CD8-positive, alpha-beta T cell (primary cell): ENCODE measurements at regions of chr1 and their contacts with region 1.

Region 1: DNA sequence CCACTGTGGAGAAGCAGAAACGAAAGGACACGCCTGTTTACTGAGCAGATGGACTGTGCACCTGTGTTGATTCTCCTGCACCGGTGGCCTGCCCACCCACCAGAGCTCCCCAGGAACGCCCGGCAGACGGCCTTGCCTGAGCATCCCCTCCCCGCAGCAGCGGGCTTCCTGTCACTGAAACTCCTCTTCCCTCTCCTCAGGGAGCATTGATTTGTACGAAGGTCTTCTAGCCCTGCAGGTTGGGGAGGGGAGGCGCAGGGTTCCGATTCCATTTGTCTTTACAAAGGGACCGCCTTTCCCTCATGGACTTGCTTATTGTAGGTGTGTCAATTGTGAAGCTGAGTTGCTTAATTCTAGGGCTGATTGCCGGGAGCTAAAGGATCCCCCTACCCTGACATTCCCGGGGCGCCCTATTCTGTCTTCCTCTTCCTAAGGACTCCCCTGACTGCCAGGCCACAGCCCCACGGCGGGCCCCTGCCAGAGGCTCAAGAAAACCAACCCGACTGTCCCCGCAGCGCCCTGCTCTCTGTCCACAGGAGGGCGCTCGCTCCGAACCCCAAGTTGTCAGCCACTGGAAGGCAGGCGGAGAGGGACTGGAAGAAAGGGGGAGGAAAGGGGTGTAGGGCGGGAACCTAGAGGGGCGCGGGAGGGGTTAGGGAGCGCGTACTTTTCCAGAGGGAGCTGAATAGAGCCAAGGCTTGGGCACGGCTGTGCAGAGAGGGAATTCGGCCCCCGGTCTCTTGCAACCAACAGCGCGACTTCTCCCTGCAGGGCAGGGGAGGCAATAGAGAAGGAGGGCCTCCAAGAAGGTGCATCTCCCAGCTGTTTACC is 2.8 kb downstream of the S100A6 start:
- DNase-seq: peak; percentile 55 to 86 (median 78)
- ATAC-seq: peak; percentile 13
- H3K4me3 ChIP-seq: peak overlapping the region in 1 of 2 experiments; percentile 33
- H3K4me3 Mint-ChIP-seq: peak overlapping the region; percentile 89
- H3K27ac ChIP-seq: peak overlapping the region; percentile 18 to 92
- H3K27ac Mint-ChIP-seq: peak overlapping the region; percentile 94
- H3K4me1 ChIP-seq: peaks cover 56% of the 10 kb centered on the region
- H3K4me1 Mint-ChIP-seq: peaks cover 67% of the 10 kb centered on the region
- H3K27me3 ChIP-seq: no peaks in the 10 kb centered on the region
- H3K27me3 Mint-ChIP-seq: no peaks in the 10 kb centered on the region
- CTCF ChIP-seq: peak; percentile 79

Region 2: DNA sequence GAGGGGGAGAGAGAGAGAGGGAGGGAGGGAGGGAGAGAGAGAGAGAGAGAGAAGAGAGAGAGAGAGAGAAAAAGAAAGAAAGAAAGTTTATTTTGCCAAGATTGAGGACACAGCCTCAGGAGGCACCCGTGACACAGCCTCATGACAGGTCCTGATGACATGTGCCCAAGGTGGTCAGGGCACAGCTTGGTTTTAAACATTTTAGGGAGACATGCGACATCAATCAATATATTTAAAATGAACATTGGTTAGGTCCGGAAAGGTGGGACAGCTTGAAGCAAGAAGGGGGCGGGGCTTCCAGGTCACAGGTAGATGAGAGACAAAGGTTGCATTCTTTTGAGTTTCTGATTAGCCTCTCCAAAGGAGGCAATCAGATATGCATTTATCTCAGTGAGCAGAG is 12.8 kb before region 1 on chr1:
- CTCF ChIA-PET with region 1: interaction called, 26 read pairs
- POLR2A ChIA-PET with region 1: interaction called, 10 read pairs
- intact Hi-C with region 1: no loop called
- DNase-seq: no peak
- ATAC-seq: no peak
- H3K4me3 ChIP-seq: no peak overlapping the region
- H3K4me3 Mint-ChIP-seq: no peak overlapping the region
- H3K27ac ChIP-seq: no peak overlapping the region
- H3K27ac Mint-ChIP-seq: no peak overlapping the region
- H3K4me1 ChIP-seq: no peaks in the 10 kb centered on the region
- H3K4me1 Mint-ChIP-seq: peaks cover 5% of the 10 kb centered on the region
- H3K27me3 ChIP-seq: no peaks in the 10 kb centered on the region
- H3K27me3 Mint-ChIP-seq: no peaks in the 10 kb centered on the region
- CTCF ChIP-seq: no peak

Region 3: DNA sequence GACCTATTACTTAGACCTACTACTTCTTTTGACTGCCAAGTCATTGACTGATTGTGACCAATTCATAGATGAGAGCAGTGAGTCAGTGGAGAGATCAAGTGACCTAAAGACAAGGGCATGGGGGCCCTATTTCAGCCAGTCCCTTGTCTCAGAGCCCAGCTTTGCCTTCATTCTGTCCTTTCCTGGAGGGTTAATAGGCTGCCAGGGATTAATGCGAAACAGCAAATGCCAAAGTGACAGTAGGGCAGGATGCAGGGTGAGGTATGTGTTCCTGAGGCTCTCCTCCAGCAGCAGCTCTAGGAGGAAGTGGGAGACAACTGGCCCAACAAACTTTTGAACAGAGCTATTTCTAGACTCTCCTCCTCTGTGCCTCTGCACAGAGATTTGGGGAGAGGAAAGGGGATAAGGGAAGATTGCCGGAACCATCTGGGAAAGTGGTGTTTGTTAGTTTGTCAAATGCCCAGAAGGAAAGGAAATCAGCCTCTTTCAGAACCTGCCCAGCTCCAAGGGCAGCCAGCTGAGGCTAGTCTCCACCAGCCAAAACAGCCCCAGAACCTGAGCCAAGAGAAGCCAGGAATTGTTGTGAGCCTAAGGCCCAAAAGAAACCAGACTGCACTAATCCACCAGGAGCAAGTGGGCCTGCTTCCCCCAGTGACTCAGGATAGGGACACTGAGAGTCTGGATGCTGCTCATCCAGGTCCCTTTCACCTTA is 21.0 kb after region 1 on chr1:
- CTCF ChIA-PET with region 1: interaction called, 201 read pairs
- POLR2A ChIA-PET with region 1: interaction called, 6 read pairs
- intact Hi-C with region 1: no loop called
- DNase-seq: no peak
- ATAC-seq: no peak
- H3K4me3 ChIP-seq: no peak overlapping the region
- H3K4me3 Mint-ChIP-seq: no peak overlapping the region
- H3K27ac ChIP-seq: no peak overlapping the region
- H3K27ac Mint-ChIP-seq: no peak overlapping the region
- H3K4me1 ChIP-seq: no peaks in the 10 kb centered on the region
- H3K4me1 Mint-ChIP-seq: no peaks in the 10 kb centered on the region
- H3K27me3 ChIP-seq: no peaks in the 10 kb centered on the region
- H3K27me3 Mint-ChIP-seq: no peaks in the 10 kb centered on the region
- CTCF ChIP-seq: no peak

Region 4: GRCh38 chr1:153572569-153573015 is 39.6 kb after region 1 on chr1:
- CTCF ChIA-PET with region 1: interaction called, 168 read pairs
- POLR2A ChIA-PET with region 1: interaction called, 11 read pairs
- intact Hi-C with region 1: loop called (anchors 1 kb)
- DNase-seq: peak in 7 of 9 experiments; percentile 27 to 60 (median 39)
- ATAC-seq: peak; percentile 52
- H3K4me3 ChIP-seq: no peak overlapping the region
- H3K4me3 Mint-ChIP-seq: no peak overlapping the region
- H3K27ac ChIP-seq: no peak overlapping the region
- H3K27ac Mint-ChIP-seq: no peak overlapping the region
- H3K4me1 ChIP-seq: peaks cover 3% of the 10 kb centered on the region
- H3K4me1 Mint-ChIP-seq: peaks cover 11% of the 10 kb centered on the region
- H3K27me3 ChIP-seq: no peaks in the 10 kb centered on the region
- H3K27me3 Mint-ChIP-seq: peaks cover 14% of the 10 kb centered on the region
- CTCF ChIP-seq: no peak

Region 5: DNA sequence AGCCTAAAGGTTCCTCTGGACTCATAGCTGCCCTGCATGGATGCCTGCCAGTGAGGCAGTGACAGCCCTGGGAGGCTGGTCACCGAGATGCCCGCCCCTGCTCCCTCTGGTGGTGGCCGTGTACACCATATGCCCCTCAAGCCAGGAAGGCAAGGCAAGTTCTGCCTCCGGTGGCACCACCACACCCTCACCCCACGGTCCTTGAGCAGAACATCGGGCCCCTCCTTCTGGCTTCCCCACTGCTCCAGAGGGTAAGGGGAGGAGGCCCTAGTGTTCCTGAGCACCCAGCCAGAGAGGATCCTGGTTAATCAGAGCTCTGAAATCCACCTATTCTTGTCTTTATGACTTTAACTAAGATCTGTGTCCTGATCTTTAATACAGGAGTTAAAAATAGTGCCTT is 84.7 kb after region 1 on chr1:
- CTCF ChIA-PET with region 1: interaction called, 10 read pairs
- POLR2A ChIA-PET with region 1: no interaction called
- intact Hi-C with region 1: loop called in 1 of 2 experiments (anchors 5 kb)
- DNase-seq: peak in 6 of 9 experiments; percentile 22 to 83 (median 70)
- ATAC-seq: peak; percentile 85
- H3K4me3 ChIP-seq: no peak overlapping the region
- H3K4me3 Mint-ChIP-seq: no peak overlapping the region
- H3K27ac ChIP-seq: no peak overlapping the region
- H3K27ac Mint-ChIP-seq: no peak overlapping the region
- H3K4me1 ChIP-seq: no peaks in the 10 kb centered on the region
- H3K4me1 Mint-ChIP-seq: peaks cover 5% of the 10 kb centered on the region
- H3K27me3 ChIP-seq: no peaks in the 10 kb centered on the region
- H3K27me3 Mint-ChIP-seq: no peaks in the 10 kb centered on the region
- CTCF ChIP-seq: peak; percentile 46

Region 6: DNA sequence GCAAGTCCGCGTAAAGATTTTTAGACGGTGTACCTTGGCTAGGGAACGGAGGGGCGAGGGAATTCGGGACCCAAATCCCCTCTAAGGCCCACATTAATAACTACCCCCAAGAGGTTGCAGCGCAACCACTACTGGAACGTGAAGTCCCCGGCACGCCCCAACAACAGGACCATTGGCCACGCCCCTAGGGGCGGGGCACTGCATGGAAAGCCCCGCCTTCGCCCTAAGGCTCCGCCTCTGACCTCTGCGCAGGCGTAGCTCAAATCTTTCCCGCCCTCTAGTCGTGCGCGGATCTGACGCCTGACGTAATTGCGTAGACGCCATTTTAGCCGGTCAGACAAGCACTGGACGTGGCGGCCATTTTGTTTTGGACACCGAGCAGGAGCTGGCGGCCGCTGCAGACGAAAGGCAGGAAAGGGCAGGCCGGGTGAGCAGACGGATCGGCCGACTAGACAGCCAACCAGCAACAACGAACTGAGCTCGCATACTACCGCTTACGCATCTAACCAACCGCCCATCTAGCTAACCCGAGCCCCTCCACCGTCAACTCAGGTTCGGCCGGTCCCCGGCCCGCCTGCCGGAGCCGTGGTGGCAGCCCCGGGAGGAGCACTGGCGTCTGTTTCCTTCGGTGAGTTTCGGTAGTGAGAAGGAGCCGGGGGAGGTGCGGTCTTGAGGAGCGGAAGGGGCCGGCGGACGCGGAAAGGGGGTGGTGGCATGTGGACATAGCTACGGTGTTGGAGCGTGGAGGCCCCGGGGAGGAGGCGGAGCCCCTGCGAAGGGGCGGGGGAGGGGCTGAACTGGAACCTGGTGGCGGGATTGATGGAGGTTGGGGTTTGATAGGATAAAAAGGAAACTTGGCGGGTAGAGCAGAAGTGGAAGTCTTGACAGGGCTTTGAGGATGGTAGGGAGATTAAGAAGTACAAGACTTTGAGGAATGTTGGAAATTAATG is 101.0 kb after region 1 on chr1 and contains the start of gene CHTOP:
- CTCF ChIA-PET with region 1: interaction called, 18 read pairs
- POLR2A ChIA-PET with region 1: interaction called, 11 read pairs
- intact Hi-C with region 1: loop called (anchors 2 kb)
- DNase-seq: peak; percentile 91 to 99 (median 96)
- ATAC-seq: peak; percentile 91
- H3K4me3 ChIP-seq: peak within 1 kb of the TSS; percentile 98 to 100
- H3K4me3 Mint-ChIP-seq: peak within 1 kb of the TSS; percentile 100
- H3K27ac ChIP-seq: peak within 1 kb of the TSS; percentile 99 to 100
- H3K27ac Mint-ChIP-seq: peak within 1 kb of the TSS; percentile 100
- H3K4me1 ChIP-seq: peaks cover 19% of the 10 kb centered on the region
- H3K4me1 Mint-ChIP-seq: peaks cover 36% of the 10 kb centered on the region
- H3K27me3 ChIP-seq: no peaks in the 10 kb centered on the region
- H3K27me3 Mint-ChIP-seq: no peaks in the 10 kb centered on the region
- CTCF ChIP-seq: no peak
- total RNA-seq, gene CHTOP: 79.1 to 81.2 TPM